ENCODE measurements at regions of chr2 and their contacts with region 1.

Region 1: GRCh38 chr2:174536304-174536703 is 49.5 kb upstream of the GPR155 start:
- DNase-seq: no peak
- H3K4me3 ChIP-seq: no peak overlapping the region
- H3K27me3 ChIP-seq: peaks cover 6% of the 10 kb centered on the region
- CTCF ChIP-seq: no peak

Region 2: GRCh38 chr2:174510583-174511189 is 25.6 kb before region 1 on chr2:
- CTCF ChIA-PET with region 1: no interaction called
- POLR2A ChIA-PET with region 1: no interaction called
- DNase-seq: no peak
- H3K4me3 ChIP-seq: no peak overlapping the region
- H3K27me3 ChIP-seq: no peaks in the 10 kb centered on the region
- CTCF ChIP-seq: no peak

Region 3: GRCh38 chr2:174546581-174547506 is 10.5 kb after region 1 on chr2:
- CTCF ChIA-PET with region 1: interaction called, 10 read pairs
- POLR2A ChIA-PET with region 1: interaction called, 3 read pairs
- DNase-seq: no peak
- H3K4me3 ChIP-seq: no peak overlapping the region
- H3K27me3 ChIP-seq: peaks cover 4% of the 10 kb centered on the region; the same call in 1 of the 2 replicates
- CTCF ChIP-seq: peak; percentile 60

Region 4: GRCh38 chr2:174667379-174667781 is 131.1 kb after region 1 on chr2:
- CTCF ChIA-PET with region 1: no interaction called
- POLR2A ChIA-PET with region 1: no interaction called
- DNase-seq: no peak
- H3K4me3 ChIP-seq: no peak overlapping the region
- H3K27me3 ChIP-seq: no peaks in the 10 kb centered on the region
- CTCF ChIP-seq: no peak

Region 5: DNA sequence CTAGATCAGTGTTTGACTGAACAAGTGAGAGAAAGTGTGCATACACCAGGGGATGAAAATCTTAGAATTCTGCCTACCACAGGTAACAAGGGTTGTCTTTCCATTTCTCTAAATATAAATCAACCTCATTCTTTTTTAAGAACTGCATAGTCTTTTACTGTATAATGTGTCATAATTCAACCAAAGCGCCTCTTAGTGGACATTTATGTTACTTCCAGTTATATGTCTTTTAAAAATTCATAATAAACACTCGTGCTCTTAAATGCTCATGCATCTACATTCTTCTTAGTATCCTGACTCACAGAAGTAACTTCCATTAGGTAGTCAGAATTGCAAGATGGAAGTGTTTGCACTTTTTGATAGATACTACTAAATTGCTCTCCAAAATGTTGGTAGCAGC is 151.8 kb after region 1 on chr2:
- CTCF ChIA-PET with region 1: no interaction called
- POLR2A ChIA-PET with region 1: no interaction called
- DNase-seq: no peak
- H3K4me3 ChIP-seq: no peak overlapping the region
- H3K27me3 ChIP-seq: peaks cover 3% of the 10 kb centered on the region
- CTCF ChIP-seq: peak; percentile 42; the same call in 1 of the 2 replicates

Measured in BJ (cell line).